ENCODE measurements at regions of chr6 and their contacts with region 1.

Region 1: GRCh38 chr6:26270903-26271667 is 93.9 kb upstream of the BTN3A2 start:
- DNase-seq: peak; percentile 86
- H3K4me3 Mint-ChIP-seq: no peak overlapping the region
- H3K27ac Mint-ChIP-seq: no peak overlapping the region
- H3K4me1 Mint-ChIP-seq: peaks cover 22% of the 10 kb centered on the region
- H3K27me3 Mint-ChIP-seq: peaks cover 2% of the 10 kb centered on the region

Region 2: GRCh38 chr6:26183581-26184366 is 87.3 kb before region 1 on chr6:
- CTCF ChIA-PET with region 1: interaction called, 3 read pairs
- POLR2A ChIA-PET with region 1: interaction called, 24 read pairs
- intact Hi-C with region 1: no loop called
- DNase-seq: peak; percentile 80
- H3K4me3 Mint-ChIP-seq: peak overlapping the region; percentile 85
- H3K27ac Mint-ChIP-seq: peak overlapping the region; percentile 95
- H3K4me1 Mint-ChIP-seq: peaks cover 37% of the 10 kb centered on the region
- H3K27me3 Mint-ChIP-seq: peaks cover under 1% of the 10 kb centered on the region

Region 3: DNA sequence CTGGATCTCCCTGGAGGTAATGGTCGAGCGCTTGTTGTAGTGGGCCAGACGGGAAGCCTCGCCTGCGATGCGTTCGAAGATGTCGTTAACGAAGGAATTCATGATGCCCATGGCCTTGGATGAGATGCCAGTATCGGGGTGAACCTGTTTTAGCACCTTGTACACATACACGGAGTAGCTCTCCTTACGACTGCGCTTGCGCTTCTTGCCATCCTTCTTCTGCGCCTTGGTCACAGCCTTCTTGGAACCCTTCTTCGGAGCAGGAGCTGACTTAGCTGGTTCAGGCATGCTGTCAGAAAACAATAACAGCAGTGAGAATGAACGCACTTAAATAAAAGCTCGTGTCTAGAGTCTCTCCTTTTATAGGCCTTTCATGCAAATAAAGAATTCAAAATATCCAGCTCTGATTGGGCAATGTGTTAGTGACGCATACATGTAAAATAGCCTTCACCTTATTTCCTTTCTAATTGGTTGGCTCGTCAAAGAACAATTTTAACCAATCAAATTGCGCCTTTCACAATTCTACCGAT is 54.7 kb before region 1 on chr6:
- CTCF ChIA-PET with region 1: interaction called, 19 read pairs
- POLR2A ChIA-PET with region 1: interaction called, 71 read pairs
- intact Hi-C with region 1: no loop called
- DNase-seq: peak; percentile 89
- H3K4me3 Mint-ChIP-seq: no peak overlapping the region
- H3K27ac Mint-ChIP-seq: no peak overlapping the region
- H3K4me1 Mint-ChIP-seq: peaks cover 5% of the 10 kb centered on the region
- H3K27me3 Mint-ChIP-seq: no peaks in the 10 kb centered on the region

Region 4: GRCh38 chr6:26240154-26241032 is 30.7 kb before region 1 on chr6:
- CTCF ChIA-PET with region 1: interaction called, 3 read pairs
- POLR2A ChIA-PET with region 1: interaction called, 153 read pairs
- intact Hi-C with region 1: loop called (anchors 2 kb)
- DNase-seq: peak; percentile 85
- H3K4me3 Mint-ChIP-seq: peak overlapping the region; percentile 70
- H3K27ac Mint-ChIP-seq: peak overlapping the region; percentile 91
- H3K4me1 Mint-ChIP-seq: peaks cover 20% of the 10 kb centered on the region
- H3K27me3 Mint-ChIP-seq: peaks cover 4% of the 10 kb centered on the region

Region 5: DNA sequence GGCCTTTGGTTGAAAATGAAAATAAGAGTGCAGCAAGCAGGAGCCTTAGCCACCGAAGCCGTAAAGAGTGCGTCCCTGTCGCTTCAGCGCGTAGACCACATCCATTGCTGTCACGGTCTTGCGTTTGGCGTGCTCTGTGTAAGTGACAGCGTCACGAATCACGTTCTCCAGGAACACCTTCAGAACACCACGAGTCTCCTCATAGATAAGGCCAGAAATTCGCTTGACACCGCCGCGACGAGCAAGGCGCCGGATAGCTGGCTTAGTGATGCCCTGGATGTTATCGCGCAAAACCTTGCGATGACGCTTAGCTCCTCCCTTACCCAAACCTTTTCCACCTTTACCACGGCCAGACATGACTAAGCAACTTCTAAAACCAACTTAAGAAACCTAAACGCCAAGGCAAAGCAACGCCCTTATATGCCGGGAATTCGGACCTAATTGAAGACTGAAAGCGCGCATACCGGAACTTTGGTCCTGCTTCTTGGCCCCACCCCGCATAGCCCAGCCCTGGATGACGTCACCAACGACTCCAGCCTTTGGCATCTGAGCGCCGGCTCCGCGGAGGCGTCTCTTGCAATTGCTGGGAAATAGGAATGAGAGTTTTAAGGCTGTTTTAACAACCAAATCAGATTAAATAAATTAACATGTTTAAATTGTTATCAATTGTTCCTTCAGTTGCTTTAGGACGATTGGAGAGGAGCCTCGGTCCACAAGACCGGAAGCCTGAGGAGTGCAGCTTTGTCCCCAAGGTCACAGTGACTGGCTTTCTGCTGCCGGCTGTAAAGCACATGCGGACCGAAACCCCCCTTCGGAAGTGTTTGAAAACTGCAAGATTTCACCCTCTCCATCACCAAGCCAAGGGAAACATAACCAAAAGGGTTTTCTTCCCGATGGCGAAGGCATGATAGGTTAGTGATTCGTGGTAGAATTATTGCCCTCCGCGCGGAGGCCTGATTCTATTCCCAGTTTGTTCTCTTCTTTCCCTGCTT is 14.4 kb after region 1 on chr6:
- CTCF ChIA-PET with region 1: interaction called, 19 read pairs
- POLR2A ChIA-PET with region 1: interaction called, 159 read pairs
- intact Hi-C with region 1: loop called (anchors 1 kb)
- DNase-seq: peak; percentile 98
- H3K4me3 Mint-ChIP-seq: peak overlapping the region; percentile 92
- H3K27ac Mint-ChIP-seq: peak overlapping the region; percentile 96
- H3K4me1 Mint-ChIP-seq: peaks cover 16% of the 10 kb centered on the region
- H3K27me3 Mint-ChIP-seq: peaks cover 5% of the 10 kb centered on the region

Region 6: GRCh38 chr6:26394289-26394688 is 123.2 kb after region 1 on chr6:
- CTCF ChIA-PET with region 1: no interaction called
- POLR2A ChIA-PET with region 1: no interaction called
- intact Hi-C with region 1: no loop called
- DNase-seq: no peak
- H3K4me3 Mint-ChIP-seq: no peak overlapping the region
- H3K27ac Mint-ChIP-seq: no peak overlapping the region
- H3K4me1 Mint-ChIP-seq: peaks cover 7% of the 10 kb centered on the region
- H3K27me3 Mint-ChIP-seq: no peaks in the 10 kb centered on the region

Region 7: DNA sequence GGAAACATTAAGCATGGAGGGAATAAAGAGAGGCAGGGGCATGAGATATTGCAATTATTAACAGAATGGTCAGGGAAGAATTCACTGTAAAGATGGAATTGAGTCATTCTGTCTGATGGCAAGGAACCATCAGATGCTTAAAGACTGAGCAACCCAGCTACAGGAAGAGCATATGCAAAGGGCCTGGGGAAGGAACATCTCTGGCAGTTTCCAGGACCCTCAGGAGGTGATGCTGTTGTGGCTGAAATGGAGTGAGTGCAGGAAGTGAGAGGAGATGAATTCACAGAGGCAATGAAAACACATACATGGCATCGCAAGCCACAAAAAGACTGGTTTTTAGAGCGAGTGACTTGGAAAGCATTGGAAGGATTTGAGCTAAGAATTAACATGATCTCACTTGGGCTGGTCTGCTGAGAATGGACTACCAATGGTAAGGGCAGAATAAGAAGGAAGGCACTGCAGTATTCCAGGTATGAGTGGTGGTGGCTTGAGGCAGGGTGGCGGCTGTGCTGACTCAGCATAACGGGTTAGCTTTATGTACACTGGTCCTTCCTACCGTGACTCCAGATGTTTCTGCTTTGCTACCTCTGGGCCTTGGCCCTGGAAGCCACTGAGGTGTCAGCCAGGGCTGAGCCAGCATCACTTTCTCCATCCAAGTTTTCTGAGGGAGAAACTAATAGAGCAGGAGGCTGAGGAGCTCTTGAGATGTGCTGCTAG is 156.2 kb after region 1 on chr6:
- CTCF ChIA-PET with region 1: no interaction called
- POLR2A ChIA-PET with region 1: no interaction called
- intact Hi-C with region 1: no loop called
- DNase-seq: no peak
- H3K4me3 Mint-ChIP-seq: no peak overlapping the region
- H3K27ac Mint-ChIP-seq: no peak overlapping the region
- H3K4me1 Mint-ChIP-seq: peaks cover 3% of the 10 kb centered on the region
- H3K27me3 Mint-ChIP-seq: no peaks in the 10 kb centered on the region

Region 8: GRCh38 chr6:26543953-26544352 is 272.9 kb after region 1 on chr6:
- CTCF ChIA-PET with region 1: no interaction called
- POLR2A ChIA-PET with region 1: no interaction called
- intact Hi-C with region 1: no loop called
- DNase-seq: no peak
- H3K4me3 Mint-ChIP-seq: no peak overlapping the region
- H3K27ac Mint-ChIP-seq: no peak overlapping the region
- H3K4me1 Mint-ChIP-seq: peaks cover 44% of the 10 kb centered on the region
- H3K27me3 Mint-ChIP-seq: no peaks in the 10 kb centered on the region

Measured in activated CD4-positive, alpha-beta memory T cell treated with anti-CD3 and anti-CD28 coated beads for 36 hours (primary cell).